Naive thymus-derived CD4-positive, alpha-beta T cell (primary cell): ENCODE measurements at regions of chr14 and their contacts with region 1.

Region 1: DNA sequence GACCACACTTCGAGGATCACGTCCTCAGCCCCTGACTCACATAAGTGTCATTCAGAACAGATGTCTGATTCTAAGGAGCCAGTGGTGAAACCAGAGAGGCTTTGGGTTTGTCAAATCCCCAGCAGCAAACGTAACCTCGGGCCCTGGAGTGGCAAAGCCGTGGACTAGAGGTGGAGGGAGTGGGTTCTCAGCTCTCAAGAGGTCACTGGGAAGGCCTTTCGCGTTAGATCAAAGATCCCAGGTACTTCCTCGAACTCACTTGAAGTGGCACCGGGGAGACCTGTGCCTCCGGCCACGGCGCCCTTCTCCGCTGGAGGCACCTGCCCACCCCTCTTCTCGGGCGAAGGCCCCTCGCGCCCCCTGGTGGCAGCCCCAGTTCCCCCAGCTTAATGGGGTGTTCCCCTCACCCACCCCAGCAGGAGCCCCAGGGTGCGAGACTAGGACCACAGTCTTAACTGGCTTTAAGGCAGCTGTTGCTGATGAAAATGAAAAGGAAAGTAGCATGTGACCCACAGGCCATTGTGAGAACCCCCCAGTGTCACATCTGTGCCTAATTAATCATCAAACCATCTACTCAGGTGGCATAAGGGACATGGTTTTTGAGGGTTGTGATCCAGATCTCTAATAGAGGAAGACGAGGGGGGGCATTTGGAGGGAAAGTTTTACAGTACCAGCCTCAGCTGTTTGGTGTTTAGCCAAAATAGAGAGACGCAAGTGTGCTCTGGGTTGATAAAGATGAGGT is 672 bp upstream of the ESR2 start:
- DNase-seq: peak; percentile 55 to 88 (median 74)
- ATAC-seq: peak; percentile 88
- H3K4me3 ChIP-seq: peak overlapping the region; percentile 69
- H3K4me3 Mint-ChIP-seq: peak overlapping the region; percentile 70 to 85 (median 82)
- H3K27ac ChIP-seq: no peak overlapping the region
- H3K27ac Mint-ChIP-seq: no peak overlapping the region
- H3K4me1 ChIP-seq: peaks cover 4 to 14% of the 10 kb centered on the region in 2 donors
- H3K4me1 Mint-ChIP-seq: peaks cover 0 to 29% (median 15%) of the 10 kb centered on the region in 7 donors
- H3K27me3 ChIP-seq: no peaks in the 10 kb centered on the region
- H3K27me3 Mint-ChIP-seq: peaks cover 19 to 40% (median 25%) of the 10 kb centered on the region in 5 donors

Region 2: GRCh38 chr14:63624203-63624602 is 670.6 kb before region 1 on chr14:
- CTCF ChIA-PET with region 1: no interaction called
- POLR2A ChIA-PET with region 1: no interaction called
- intact Hi-C with region 1: loop called in 1 of 2 experiments (anchors 10 kb)
- DNase-seq: no peak
- ATAC-seq: no peak
- H3K4me3 ChIP-seq: no peak overlapping the region
- H3K4me3 Mint-ChIP-seq: no peak overlapping the region
- H3K27ac ChIP-seq: no peak overlapping the region
- H3K27ac Mint-ChIP-seq: peak overlapping the region in 1 of 9 donors; percentile 30
- H3K4me1 ChIP-seq: no peaks in the 10 kb centered on the region
- H3K4me1 Mint-ChIP-seq: peaks cover 15 to 67% (median 53%) of the 10 kb centered on the region in 7 donors
- H3K27me3 ChIP-seq: no peaks in the 10 kb centered on the region
- H3K27me3 Mint-ChIP-seq: no peaks in the 10 kb centered on the region

Region 3: DNA sequence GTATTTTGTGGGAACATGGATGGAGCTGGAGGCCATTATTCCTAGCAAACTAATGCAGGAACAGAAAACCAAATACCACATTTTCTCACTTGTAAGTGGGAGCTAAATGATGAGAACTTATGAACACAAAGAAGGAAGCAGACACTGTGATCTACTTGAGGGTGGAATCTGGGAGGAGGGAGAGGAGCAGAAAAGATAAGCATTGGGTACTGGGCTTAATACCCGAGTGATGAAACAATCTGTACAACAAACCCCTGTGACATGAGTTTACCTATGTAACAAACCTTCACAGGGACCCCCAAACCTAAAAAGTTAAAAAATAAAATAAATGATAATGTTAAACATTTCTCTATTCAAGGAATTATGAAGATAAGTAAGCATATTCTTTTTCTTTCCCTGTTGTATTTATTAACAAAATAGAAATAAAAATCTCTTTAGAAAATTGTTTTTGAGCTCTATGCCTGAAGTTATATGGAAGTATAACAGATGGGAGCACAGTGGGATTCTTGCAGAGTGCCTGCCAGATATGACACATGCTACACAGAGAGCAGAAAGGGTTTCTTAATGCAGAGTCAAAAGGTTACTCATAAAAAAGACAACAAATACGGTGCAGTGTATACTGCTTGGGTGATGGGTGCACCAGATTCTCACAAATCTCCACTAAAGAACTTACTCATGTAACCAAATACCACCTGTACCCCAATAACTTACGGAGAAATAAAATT is 494.0 kb before region 1 on chr14:
- CTCF ChIA-PET with region 1: interaction called, 14 read pairs
- POLR2A ChIA-PET with region 1: no interaction called
- intact Hi-C with region 1: loop called (anchors 1 kb)
- DNase-seq: no peak
- ATAC-seq: no peak
- H3K4me3 ChIP-seq: no peak overlapping the region
- H3K4me3 Mint-ChIP-seq: no peak overlapping the region
- H3K27ac ChIP-seq: no peak overlapping the region
- H3K27ac Mint-ChIP-seq: peak overlapping the region in 1 of 9 donors; percentile 46
- H3K4me1 ChIP-seq: no peaks in the 10 kb centered on the region
- H3K4me1 Mint-ChIP-seq: peaks cover 3 to 12% (median 4%) of the 10 kb centered on the region in 7 donors
- H3K27me3 ChIP-seq: no peaks in the 10 kb centered on the region
- H3K27me3 Mint-ChIP-seq: peaks cover 0 to 17% (median 0%) of the 10 kb centered on the region in 5 donors

Region 4: DNA sequence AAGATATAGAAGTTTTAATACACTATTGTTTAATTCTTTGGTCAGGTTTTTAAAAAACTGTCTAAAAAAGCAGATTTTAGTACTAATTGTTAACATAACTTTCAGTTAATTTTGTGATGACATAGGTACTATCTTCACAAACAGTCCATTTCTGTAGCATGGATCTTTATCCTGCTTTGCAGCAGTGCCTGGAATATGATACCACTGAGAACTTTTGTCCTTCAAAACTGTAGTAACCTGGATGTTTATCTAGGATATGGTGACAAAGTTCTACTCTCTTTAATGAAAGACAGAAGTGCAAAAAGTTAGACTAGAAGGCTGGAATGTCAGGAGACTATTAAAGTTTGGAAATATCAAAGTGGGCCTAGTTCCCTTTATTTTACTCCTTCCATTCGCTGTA is 282.1 kb before region 1 on chr14:
- CTCF ChIA-PET with region 1: no interaction called
- POLR2A ChIA-PET with region 1: no interaction called
- intact Hi-C with region 1: loop called (anchors 5 to 10 kb)
- DNase-seq: no peak
- ATAC-seq: no peak
- H3K4me3 ChIP-seq: no peak overlapping the region
- H3K4me3 Mint-ChIP-seq: no peak overlapping the region
- H3K27ac ChIP-seq: no peak overlapping the region
- H3K27ac Mint-ChIP-seq: no peak overlapping the region
- H3K4me1 ChIP-seq: no peaks in the 10 kb centered on the region
- H3K4me1 Mint-ChIP-seq: no peaks in the 10 kb centered on the region
- H3K27me3 ChIP-seq: no peaks in the 10 kb centered on the region
- H3K27me3 Mint-ChIP-seq: no peaks in the 10 kb centered on the region

Region 5: DNA sequence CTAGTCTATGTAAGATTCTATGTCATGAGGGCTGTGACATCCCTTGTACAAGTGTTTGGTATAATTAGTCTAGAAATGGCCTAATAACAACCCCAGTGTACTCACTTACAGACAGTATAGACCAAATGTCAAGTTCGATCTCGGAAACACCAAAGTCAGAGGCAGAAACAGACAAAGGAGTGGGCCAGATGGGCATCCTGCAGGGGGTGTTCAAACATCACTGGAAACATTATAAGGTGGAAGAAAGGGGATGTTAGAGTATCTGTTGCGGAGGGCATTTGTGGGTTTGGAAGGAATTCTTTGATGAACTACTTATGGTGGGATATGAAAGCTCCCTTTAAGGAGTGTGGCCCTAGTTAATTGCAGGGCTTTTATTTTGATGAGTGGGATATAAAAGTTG is 135.3 kb before region 1 on chr14:
- CTCF ChIA-PET with region 1: no interaction called
- POLR2A ChIA-PET with region 1: no interaction called
- intact Hi-C with region 1: loop called in 1 of 2 experiments (anchors 10 kb)
- DNase-seq: no peak
- ATAC-seq: no peak
- H3K4me3 ChIP-seq: no peak overlapping the region
- H3K4me3 Mint-ChIP-seq: no peak overlapping the region
- H3K27ac ChIP-seq: no peak overlapping the region
- H3K27ac Mint-ChIP-seq: peak overlapping the region in 1 of 9 donors; percentile 19
- H3K4me1 ChIP-seq: no peaks in the 10 kb centered on the region
- H3K4me1 Mint-ChIP-seq: no peaks in the 10 kb centered on the region
- H3K27me3 ChIP-seq: no peaks in the 10 kb centered on the region
- H3K27me3 Mint-ChIP-seq: no peaks in the 10 kb centered on the region

Region 6: DNA sequence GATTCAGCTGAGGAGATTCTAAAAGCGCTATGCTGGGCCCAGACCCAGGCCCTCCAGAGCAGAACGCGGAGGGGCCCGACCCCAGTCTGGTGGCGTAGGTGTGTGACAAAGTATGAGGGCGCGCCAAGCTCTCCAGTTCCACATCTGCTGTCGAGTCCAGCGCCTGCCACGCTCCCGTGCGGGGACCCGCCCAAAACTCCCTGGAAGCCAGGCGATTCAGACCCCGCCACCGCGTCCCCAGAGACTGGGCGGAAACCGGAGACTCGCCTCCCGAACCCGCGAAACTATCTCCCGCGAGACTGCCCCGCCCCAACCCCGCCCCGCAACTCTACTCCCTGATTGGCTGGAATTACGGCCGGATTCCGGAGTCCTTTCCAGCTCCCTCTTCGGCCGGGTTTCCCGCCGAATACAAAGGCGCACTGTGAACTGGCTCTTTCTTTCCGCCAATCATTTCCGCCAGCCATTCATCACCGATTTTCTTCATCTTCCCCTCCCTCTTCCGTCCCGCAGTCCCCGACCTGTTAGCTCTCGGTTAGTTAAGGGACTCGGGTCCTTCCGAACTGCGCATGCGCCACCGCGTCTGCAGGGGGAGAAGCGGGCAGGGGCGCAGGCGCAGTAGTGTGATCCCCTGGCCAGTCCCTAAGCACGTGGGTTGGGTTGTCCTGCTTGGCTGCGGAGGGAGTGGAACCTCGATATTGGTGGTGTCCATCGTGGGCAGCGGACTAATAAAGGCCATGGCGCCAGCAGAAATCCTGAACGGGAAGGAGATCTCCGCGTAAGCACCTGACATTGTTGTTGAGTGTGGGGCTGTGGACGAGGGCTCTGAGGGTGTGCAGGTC is 93.1 kb after region 1 on chr14 and contains the start of gene MTHFD1:
- CTCF ChIA-PET with region 1: no interaction called
- POLR2A ChIA-PET with region 1: no interaction called
- intact Hi-C with region 1: no loop called
- DNase-seq: peak; percentile 93 to 97 (median 96)
- ATAC-seq: peak; percentile 90
- H3K4me3 ChIP-seq: peak within 1 kb of the TSS; percentile 89
- H3K4me3 Mint-ChIP-seq: peak within 1 kb of the TSS; percentile 92 to 99 (median 96)
- H3K27ac ChIP-seq: peak within 1 kb of the TSS; percentile 79
- H3K27ac Mint-ChIP-seq: peak within 1 kb of the TSS; percentile 90 to 99 (median 95)
- H3K4me1 ChIP-seq: peaks cover 11 to 17% of the 10 kb centered on the region in 2 donors
- H3K4me1 Mint-ChIP-seq: peaks cover 18 to 49% (median 41%) of the 10 kb centered on the region in 7 donors
- H3K27me3 ChIP-seq: no peaks in the 10 kb centered on the region
- H3K27me3 Mint-ChIP-seq: peaks cover 0 to 4% (median 0%) of the 10 kb centered on the region in 5 donors
- total RNA-seq, gene MTHFD1: 28.0 to 189 (median 30.2) TPM